Colonic mucosa (tissue), 4 donors: ENCODE measurements at regions of chr6 and their contacts with region 1.

Region 1: GRCh38 chr6:34414999-34415858 is 10.6 kb downstream of the RPS10 start:
- DNase-seq: peak; percentile 80
- H3K4me3 ChIP-seq: no peak overlapping the region
- H3K27ac ChIP-seq: peak overlapping the region; percentile 69
- H3K4me1 ChIP-seq: peaks cover 6% of the 10 kb centered on the region
- H3K27me3 ChIP-seq: no peaks in the 10 kb centered on the region
- CTCF ChIP-seq: peak; percentile 61

Region 2: GRCh38 chr6:34161857-34162515 is 253.2 kb before region 1 on chr6:
- intact Hi-C with region 1: loop called (anchors 10 kb)
- DNase-seq: no peak
- H3K4me3 ChIP-seq: no peak overlapping the region
- H3K27ac ChIP-seq: no peak overlapping the region
- H3K4me1 ChIP-seq: no peaks in the 10 kb centered on the region
- H3K27me3 ChIP-seq: no peaks in the 10 kb centered on the region
- CTCF ChIP-seq: no peak

Region 3: GRCh38 chr6:34196126-34196830 is 219.0 kb before region 1 on chr6:
- intact Hi-C with region 1: loop called (anchors 2 kb)
- DNase-seq: peak; percentile 87
- H3K4me3 ChIP-seq: peak overlapping the region; percentile 62
- H3K27ac ChIP-seq: no peak overlapping the region
- H3K4me1 ChIP-seq: peaks cover 3% of the 10 kb centered on the region
- H3K27me3 ChIP-seq: no peaks in the 10 kb centered on the region
- CTCF ChIP-seq: peak; percentile 97

Region 4: GRCh38 chr6:34248727-34249551 is 166.3 kb before region 1 on chr6 and contains the start of gene SMIM29:
- intact Hi-C with region 1: loop called (anchors 2 kb)
- DNase-seq: peak; percentile 98
- H3K4me3 ChIP-seq: peak within 1 kb of the TSS; percentile 77
- H3K27ac ChIP-seq: peak within 1 kb of the TSS; percentile 86
- H3K4me1 ChIP-seq: peaks cover 3% of the 10 kb centered on the region
- H3K27me3 ChIP-seq: no peaks in the 10 kb centered on the region
- CTCF ChIP-seq: peak; percentile 87
- total RNA-seq, gene SMIM29: 8.6 to 12.8 TPM